HepG2 (cell line): ENCODE measurements at regions of chr14 and their contacts with region 1.

Region 1: GRCh38 chr14:59148334-59148900 is 40.0 kb upstream of the DAAM1 start:
- DNase-seq: no peak
- ATAC-seq: no peak
- H3K4me3 ChIP-seq: no peak overlapping the region
- H3K27ac ChIP-seq: no peak overlapping the region
- H3K4me1 ChIP-seq: no peaks in the 10 kb centered on the region
- H3K27me3 ChIP-seq: peaks cover 0 to 3% of the 10 kb centered on the region in 2 experiments; a peak in 1 of 5 replicates
- CTCF ChIP-seq: no peak
- EP300 ChIP-seq: no peak
- POLR2A ChIP-seq: no peak
- RAD21 ChIP-seq: no peak

Region 2: DNA sequence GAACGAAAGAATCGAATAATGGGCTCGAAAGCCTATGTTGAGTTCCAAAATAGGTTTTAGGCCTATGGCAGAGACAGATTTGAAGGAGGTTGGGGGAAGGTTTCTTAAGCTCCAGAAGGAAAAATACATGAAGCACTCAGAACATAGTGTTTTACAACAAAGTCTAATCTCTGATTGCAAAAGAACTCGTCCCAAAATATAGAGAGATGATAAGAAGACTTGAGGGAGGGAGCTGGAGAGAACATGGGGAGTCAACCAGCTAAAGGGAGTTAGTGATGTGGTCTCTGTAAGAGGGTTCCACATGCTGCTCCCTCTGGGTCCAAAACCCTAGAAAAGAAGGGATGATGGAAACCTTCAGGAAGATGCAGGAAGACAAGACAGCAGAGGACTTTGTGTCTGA is 14.7 kb before region 1 on chr14:
- CTCF ChIA-PET with region 1: no interaction called
- POLR2A ChIA-PET with region 1: no interaction called
- in situ Hi-C with region 1: no loop called
- intact Hi-C with region 1: loop called (anchors 2 kb)
- DNase-seq: no peak
- ATAC-seq: no peak
- H3K4me3 ChIP-seq: no peak overlapping the region
- H3K27ac ChIP-seq: no peak overlapping the region
- H3K4me1 ChIP-seq: peaks cover 10% of the 10 kb centered on the region
- H3K27me3 ChIP-seq: no peaks in the 10 kb centered on the region; a peak in 1 of 5 replicates
- CTCF ChIP-seq: no peak
- EP300 ChIP-seq: no peak
- POLR2A ChIP-seq: no peak
- RAD21 ChIP-seq: no peak